HEK293 (cell line): ENCODE measurements at regions of chr6 and their contacts with region 1.

Region 1: DNA sequence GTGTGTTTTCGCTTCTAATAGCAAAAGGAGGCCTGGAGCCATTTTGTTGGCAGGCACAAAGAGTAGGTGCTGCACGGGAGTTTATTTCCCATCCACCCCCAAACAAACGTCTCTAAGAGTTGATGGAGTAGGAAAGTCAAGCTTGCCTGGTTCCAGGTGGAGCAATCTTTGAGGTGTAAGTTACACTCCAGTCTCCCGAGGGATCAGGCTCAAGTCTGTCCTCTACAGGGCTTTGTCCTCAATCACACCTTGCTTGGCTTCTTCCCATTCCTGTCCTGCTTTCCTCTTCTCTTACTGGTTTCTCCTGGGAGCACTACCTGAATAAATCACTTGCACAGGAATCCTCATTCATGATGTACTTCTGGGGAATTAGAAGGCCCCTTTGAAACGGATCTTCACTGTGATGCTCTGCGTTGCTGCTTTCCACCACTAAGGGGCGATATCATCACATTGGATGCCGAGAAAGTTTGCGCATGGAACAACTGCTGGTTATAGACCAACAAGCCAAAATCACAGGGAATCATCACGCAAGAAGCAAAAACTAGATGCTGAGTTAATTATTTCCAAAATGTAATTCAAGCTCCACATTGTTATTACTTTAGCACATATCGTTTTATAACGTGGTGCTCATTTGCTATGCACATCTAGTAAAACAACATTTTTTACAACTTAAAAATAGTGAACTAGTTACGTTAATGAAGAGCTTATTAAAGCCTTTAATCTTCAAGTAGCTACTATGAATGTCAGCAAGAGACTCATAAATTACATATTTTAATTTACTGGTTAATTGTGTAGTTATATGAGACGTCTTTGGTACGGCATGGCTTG is 156.8 kb downstream of the DNAH8 start:
- H3K4me3 ChIP-seq: no peak overlapping the region
- H3K27ac ChIP-seq: no peak overlapping the region
- H3K4me1 ChIP-seq: no peaks in the 10 kb centered on the region
- CTCF ChIP-seq: peak; percentile 92

Region 2: DNA sequence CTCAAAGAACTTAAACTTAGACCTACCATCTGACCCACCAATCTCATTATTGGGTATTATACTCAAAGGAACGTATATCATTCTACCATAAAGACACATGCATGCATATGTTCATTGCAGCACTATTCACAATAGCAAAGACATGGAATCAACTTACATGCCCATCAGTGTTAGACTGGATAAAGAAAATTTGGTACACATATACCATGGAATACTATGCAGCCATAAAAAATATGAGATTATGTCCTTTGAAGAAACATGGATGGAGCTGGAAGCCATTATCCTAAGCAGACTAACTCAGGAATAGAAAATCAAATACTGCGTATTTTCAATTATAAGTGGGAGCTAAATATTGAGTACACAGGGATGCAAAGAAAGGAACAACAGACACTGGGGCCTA is 10.2 kb after region 1 on chr6:
- CTCF ChIA-PET with region 1: interaction called, 51 read pairs
- POLR2A ChIA-PET with region 1: no interaction called
- H3K4me3 ChIP-seq: no peak overlapping the region
- H3K27ac ChIP-seq: no peak overlapping the region
- H3K4me1 ChIP-seq: no peaks in the 10 kb centered on the region
- CTCF ChIP-seq: no peak

Region 3: DNA sequence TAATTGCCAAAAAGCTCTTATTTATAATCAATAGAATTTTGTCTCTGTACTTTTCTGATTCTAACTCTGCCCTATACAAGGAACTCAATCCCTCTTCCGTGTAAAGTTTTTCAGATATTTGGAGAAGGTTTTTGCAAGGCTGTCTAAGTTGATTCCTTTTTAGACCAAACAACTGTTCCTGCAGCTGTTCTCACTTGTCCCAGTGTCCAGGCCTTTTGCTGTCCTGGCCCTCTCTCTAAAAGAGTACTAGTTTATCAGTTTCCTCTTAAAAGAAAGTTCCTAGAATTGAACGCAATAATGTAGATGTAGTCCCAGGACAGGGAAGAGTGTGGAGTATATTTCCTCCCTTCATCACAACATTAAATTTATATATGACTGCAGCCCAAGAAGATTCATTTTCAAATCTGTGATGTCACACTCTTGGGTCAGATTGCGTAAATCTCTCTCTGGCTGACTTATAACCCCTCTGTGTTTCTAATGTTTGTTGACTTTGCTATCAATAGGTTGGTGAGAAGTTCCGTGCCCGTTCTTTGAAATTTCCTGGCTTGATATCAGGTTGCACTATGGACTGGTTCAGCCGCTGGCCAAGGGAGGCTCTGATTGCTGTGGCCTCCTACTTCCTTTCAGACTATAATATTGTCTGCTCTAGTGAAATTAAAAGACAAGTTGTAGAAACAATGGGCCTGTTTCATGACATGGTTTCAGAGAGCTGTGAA is 37.2 kb after region 1 on chr6:
- CTCF ChIA-PET with region 1: interaction called, 19 read pairs
- POLR2A ChIA-PET with region 1: no interaction called
- H3K4me3 ChIP-seq: no peak overlapping the region
- H3K27ac ChIP-seq: no peak overlapping the region
- H3K4me1 ChIP-seq: peaks cover 7% of the 10 kb centered on the region; the same call in 1 of the 2 replicates
- CTCF ChIP-seq: no peak

Region 4: DNA sequence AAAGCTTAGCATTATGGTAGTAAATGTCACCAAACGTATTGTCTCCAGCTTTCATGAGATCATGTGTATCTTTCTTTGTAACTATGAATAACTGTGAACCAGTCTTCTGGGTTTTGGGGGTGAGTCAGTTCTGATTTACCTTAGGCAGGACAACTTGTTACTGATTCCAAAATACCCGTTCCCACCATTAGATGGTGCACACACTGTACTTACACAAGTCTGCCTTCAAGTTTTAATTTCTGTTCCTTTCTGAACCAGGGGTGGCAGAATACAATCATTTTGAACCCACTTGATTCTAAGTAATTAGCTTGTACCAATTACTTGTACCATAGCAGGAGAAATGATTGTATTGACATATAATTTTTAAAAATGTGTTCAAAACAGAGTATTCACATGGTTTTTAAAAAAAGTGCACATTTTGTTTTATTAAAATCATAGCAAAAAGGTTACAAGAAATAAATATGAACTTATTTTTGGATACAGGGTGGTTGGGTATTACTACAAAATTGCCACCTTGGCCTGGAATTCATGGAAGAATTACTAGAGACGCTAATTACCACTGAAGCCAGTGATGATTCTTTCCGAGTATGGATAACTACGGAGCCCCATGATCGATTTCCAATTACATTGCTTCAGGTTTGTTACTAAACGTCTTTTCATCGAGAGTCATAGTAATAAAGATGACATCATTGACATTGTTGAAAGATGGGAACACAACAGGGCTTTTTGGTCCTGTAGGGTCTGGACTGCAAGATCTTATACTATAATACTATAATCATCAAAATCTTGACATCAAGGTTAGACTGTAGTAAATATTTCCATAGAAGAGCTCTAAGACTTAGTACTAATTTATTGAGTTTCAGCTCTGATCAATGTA is 101.5 kb after region 1 on chr6:
- CTCF ChIA-PET with region 1: interaction called, 44 read pairs
- POLR2A ChIA-PET with region 1: no interaction called
- H3K4me3 ChIP-seq: no peak overlapping the region
- H3K27ac ChIP-seq: no peak overlapping the region
- H3K4me1 ChIP-seq: peaks cover 43% of the 10 kb centered on the region
- CTCF ChIP-seq: peak; percentile 83

Region 5: DNA sequence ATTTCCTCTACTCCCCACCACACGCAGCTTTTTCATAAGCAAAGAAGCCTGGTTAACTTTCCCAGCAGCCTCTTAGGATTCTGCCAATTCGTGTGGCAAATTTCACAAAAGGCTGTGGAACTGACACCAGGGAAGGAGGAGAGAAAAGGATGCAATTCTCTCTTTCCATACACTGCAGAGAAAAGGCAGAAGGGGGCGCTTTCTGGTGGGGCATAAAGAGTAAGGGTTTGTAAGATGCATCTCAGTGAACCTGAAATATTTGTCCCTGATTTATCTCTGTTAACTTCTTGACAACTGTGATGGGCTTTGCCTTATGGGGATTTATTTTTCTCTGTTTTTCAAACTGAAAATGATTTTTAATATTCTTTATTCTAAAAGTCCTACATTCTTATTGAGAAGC is 131.1 kb after region 1 on chr6:
- CTCF ChIA-PET with region 1: interaction called, 25 read pairs
- POLR2A ChIA-PET with region 1: no interaction called
- H3K4me3 ChIP-seq: no peak overlapping the region
- H3K27ac ChIP-seq: no peak overlapping the region
- H3K4me1 ChIP-seq: no peaks in the 10 kb centered on the region
- CTCF ChIP-seq: no peak

Region 6: GRCh38 chr6:39166189-39166911 is 294.4 kb after region 1 on chr6:
- CTCF ChIA-PET with region 1: interaction called, 65 read pairs
- POLR2A ChIA-PET with region 1: no interaction called
- H3K4me3 ChIP-seq: no peak overlapping the region
- H3K27ac ChIP-seq: no peak overlapping the region
- H3K4me1 ChIP-seq: no peaks in the 10 kb centered on the region
- CTCF ChIP-seq: peak; percentile 96

Region 7: GRCh38 chr6:39309942-39310531 is 438.1 kb after region 1 on chr6:
- CTCF ChIA-PET with region 1: interaction called, 41 read pairs
- POLR2A ChIA-PET with region 1: no interaction called
- H3K4me3 ChIP-seq: no peak overlapping the region
- H3K27ac ChIP-seq: no peak overlapping the region
- H3K4me1 ChIP-seq: no peaks in the 10 kb centered on the region
- CTCF ChIP-seq: peak; percentile 90